T-cell (primary cell): ENCODE measurements at regions of chr1 and their contacts with region 1.

Region 1: GRCh38 chr1:160098852-160099561 is 588 bp upstream of the IGSF8 start:
- DNase-seq: peak; percentile 93 to 99 (median 98)
- ATAC-seq: peak; percentile 86 to 91 (median 88)
- H3K4me3 ChIP-seq: peak overlapping the region; percentile 60 to 65
- H3K4me3 Mint-ChIP-seq: peak overlapping the region; percentile 68 to 91 (median 78)
- H3K27ac ChIP-seq: peak overlapping the region; percentile 99
- H3K27ac Mint-ChIP-seq: peak overlapping the region; percentile 94 to 98
- H3K4me1 ChIP-seq: peaks cover 12 to 66% of the 10 kb centered on the region in 2 experiments
- H3K4me1 Mint-ChIP-seq: peaks cover 62 to 64% (median 62%) of the 10 kb centered on the region in 3 donors
- H3K27me3 ChIP-seq: peaks cover 0 to 2% of the 10 kb centered on the region in 2 experiments
- H3K27me3 Mint-ChIP-seq: no peaks in the 10 kb centered on the region

Region 2: DNA sequence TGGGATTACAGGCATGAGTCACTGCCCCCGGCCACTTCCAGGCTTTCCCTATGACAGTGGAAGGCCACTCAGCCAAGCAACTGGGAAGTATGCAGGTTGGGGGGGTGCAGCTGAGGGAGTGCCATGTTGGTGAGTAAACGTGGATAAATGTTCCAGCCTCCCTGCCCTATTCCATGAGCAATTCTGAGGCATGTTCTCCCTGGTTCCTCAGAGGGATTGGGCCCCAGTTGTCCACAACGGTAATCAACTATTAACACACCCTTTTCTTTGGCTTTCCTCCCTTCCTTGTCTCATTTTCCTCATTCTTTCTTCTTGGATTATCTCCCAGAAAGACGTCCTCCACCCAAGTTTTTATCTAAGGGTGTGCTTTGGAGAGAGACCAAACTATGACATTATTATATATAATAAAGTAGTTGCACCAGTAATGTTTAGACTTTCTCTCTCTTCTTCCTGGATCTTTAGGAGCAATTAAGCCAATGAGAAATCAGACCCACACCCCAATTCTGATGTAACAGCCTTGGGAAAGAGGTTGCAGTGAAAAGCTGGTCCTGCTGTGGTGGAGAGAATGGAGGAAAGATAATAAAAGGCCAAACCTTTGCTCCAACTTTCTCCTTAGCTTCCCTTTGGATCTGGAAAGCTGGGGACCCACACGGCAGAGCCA is 138.2 kb before region 1 on chr1:
- CTCF ChIA-PET with region 1: no interaction called
- POLR2A ChIA-PET with region 1: no interaction called
- DNase-seq: no peak
- ATAC-seq: no peak
- H3K4me3 ChIP-seq: no peak overlapping the region
- H3K4me3 Mint-ChIP-seq: no peak overlapping the region
- H3K27ac ChIP-seq: no peak overlapping the region
- H3K27ac Mint-ChIP-seq: no peak overlapping the region
- H3K4me1 ChIP-seq: no peaks in the 10 kb centered on the region
- H3K4me1 Mint-ChIP-seq: no peaks in the 10 kb centered on the region
- H3K27me3 ChIP-seq: peaks cover 0 to 21% of the 10 kb centered on the region in 2 experiments
- H3K27me3 Mint-ChIP-seq: peaks cover 10 to 29% of the 10 kb centered on the region in 2 donors

Region 3: GRCh38 chr1:160046494-160047110 is 52.4 kb before region 1 on chr1:
- CTCF ChIA-PET with region 1: interaction called in 1 of 2 experiments, 18 read pairs
- POLR2A ChIA-PET with region 1: no interaction called
- DNase-seq: peak in 13 of 35 experiments; percentile 8 to 63 (median 22)
- ATAC-seq: peak; percentile 75 to 82 (median 80)
- H3K4me3 ChIP-seq: peak overlapping the region in 1 of 2 donors; percentile 58
- H3K4me3 Mint-ChIP-seq: peak overlapping the region; percentile 58 to 70 (median 61)
- H3K27ac ChIP-seq: no peak overlapping the region
- H3K27ac Mint-ChIP-seq: peak overlapping the region; percentile 32 to 57
- H3K4me1 ChIP-seq: peaks cover 0 to 8% of the 10 kb centered on the region in 2 experiments
- H3K4me1 Mint-ChIP-seq: peaks cover 8 to 13% (median 12%) of the 10 kb centered on the region in 3 donors
- H3K27me3 ChIP-seq: peaks cover 0 to 24% of the 10 kb centered on the region in 2 experiments
- H3K27me3 Mint-ChIP-seq: peaks cover 14 to 33% of the 10 kb centered on the region in 2 donors

Region 4: DNA sequence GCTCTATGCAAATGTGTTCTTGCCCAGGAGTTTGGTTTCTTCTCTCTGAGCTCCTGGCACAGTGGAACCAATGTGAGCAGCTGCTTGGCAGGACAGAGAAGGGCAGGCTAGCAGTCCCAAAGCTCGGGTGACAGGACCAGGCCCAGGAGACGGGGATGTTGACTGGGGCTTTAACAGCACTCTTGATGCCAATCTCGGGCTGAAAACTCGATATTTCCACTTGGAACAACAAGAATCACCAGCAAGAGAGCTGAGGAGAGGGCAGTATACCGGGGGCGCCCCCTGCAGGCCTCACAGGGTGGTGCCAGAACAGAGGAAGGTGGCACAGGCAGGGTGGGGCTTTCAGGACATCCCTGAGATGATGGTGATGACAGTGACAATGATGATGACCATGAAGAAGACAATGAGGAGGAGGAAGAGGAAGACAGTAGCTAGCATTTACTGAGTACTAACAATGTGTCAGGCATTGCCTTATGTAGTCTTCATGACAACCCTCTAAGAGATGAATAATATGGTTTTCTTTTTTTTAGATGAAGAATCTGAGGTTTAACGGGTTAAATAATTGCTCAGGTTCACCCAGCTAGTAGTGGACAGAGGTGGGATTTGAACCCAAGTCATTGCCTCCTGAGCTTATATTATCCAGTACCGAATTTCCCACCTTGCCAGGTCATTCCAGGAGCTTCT is 20.4 kb before region 1 on chr1:
- CTCF ChIA-PET with region 1: interaction called, 5 to 10 read pairs
- POLR2A ChIA-PET with region 1: no interaction called
- DNase-seq: peak in 29 of 35 experiments; percentile 28 to 69 (median 49)
- ATAC-seq: peak; percentile 70 to 85 (median 81)
- H3K4me3 ChIP-seq: no peak overlapping the region
- H3K4me3 Mint-ChIP-seq: no peak overlapping the region
- H3K27ac ChIP-seq: no peak overlapping the region
- H3K27ac Mint-ChIP-seq: no peak overlapping the region
- H3K4me1 ChIP-seq: peaks cover 0 to 8% of the 10 kb centered on the region in 2 experiments
- H3K4me1 Mint-ChIP-seq: peaks cover 0 to 4% (median 2%) of the 10 kb centered on the region in 3 donors
- H3K27me3 ChIP-seq: peaks cover 15 to 50% of the 10 kb centered on the region in 2 experiments
- H3K27me3 Mint-ChIP-seq: peaks cover 40 to 70% of the 10 kb centered on the region in 2 donors

Region 5: DNA sequence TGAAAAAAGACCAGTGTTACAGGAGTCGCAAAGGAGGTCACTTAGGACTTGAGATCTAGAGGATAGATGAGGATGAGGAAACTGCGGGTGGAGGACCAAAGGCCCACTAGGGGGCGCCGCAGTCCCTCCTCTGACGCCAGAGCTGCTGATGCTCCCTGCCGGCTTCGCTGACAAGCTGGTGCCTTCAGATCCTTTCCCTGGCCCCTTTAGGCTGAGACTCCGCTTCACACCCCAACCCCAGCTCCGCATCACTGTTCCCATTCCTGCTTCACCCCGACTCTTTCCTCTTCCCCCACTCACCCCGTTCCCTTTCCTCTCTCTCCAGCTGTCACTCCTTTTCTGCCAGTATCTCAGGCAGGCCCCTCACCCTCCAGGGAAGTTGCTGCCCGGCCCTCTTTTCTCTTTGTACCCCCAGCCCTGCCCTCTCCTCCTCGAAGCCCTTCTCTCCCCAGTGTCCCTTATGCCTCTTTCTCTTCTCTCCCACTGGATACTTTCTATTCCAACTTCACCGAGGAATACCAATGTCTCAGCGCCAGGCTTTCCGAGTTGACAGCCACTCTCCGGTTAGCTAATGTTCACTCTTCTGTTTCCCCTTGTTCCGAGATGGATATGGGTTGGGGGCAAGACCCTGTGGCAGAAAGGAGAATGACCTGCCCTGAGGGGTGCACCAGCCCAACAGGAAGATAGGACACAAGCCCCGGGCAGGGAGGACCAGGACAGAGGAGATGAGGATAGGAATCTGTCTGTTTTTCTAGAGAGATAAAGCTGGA is 13.1 kb before region 1 on chr1:
- CTCF ChIA-PET with region 1: interaction called, 4 to 26 read pairs
- POLR2A ChIA-PET with region 1: interaction called in 1 of 2 experiments, 3 read pairs
- DNase-seq: peak; percentile 46 to 87 (median 71)
- ATAC-seq: peak; percentile 51 to 71 (median 62)
- H3K4me3 ChIP-seq: no peak overlapping the region
- H3K4me3 Mint-ChIP-seq: peak overlapping the region in 1 of 3 donors; percentile 24
- H3K27ac ChIP-seq: no peak overlapping the region
- H3K27ac Mint-ChIP-seq: peak overlapping the region in 1 of 2 donors; percentile 48
- H3K4me1 ChIP-seq: peaks cover 0 to 16% of the 10 kb centered on the region in 2 experiments
- H3K4me1 Mint-ChIP-seq: peaks cover 14 to 22% (median 19%) of the 10 kb centered on the region in 3 donors
- H3K27me3 ChIP-seq: peaks cover 6 to 29% of the 10 kb centered on the region in 2 experiments
- H3K27me3 Mint-ChIP-seq: peaks cover 8 to 20% of the 10 kb centered on the region in 2 donors

Region 6: GRCh38 chr1:160291248-160292220 is 192.5 kb after region 1 on chr1:
- CTCF ChIA-PET with region 1: interaction called, 10 to 25 read pairs
- POLR2A ChIA-PET with region 1: interaction called in 1 of 2 experiments, 4 read pairs
- DNase-seq: peak; percentile 27 to 87 (median 63)
- ATAC-seq: peak; percentile 95 to 97 (median 96)
- H3K4me3 ChIP-seq: no peak overlapping the region
- H3K4me3 Mint-ChIP-seq: no peak overlapping the region
- H3K27ac ChIP-seq: no peak overlapping the region
- H3K27ac Mint-ChIP-seq: peak overlapping the region; percentile 5 to 40
- H3K4me1 ChIP-seq: peaks cover 0 to 3% of the 10 kb centered on the region in 2 experiments
- H3K4me1 Mint-ChIP-seq: peaks cover 0 to 5% (median 2%) of the 10 kb centered on the region in 3 donors
- H3K27me3 ChIP-seq: no peaks in the 10 kb centered on the region
- H3K27me3 Mint-ChIP-seq: no peaks in the 10 kb centered on the region